ENCODE measurements at regions of chr14 and their contacts with region 1.

Region 1: GRCh38 chr14:47353186-47353585 is 322.2 kb downstream of the MDGA2 start:
- DNase-seq: no peak
- H3K4me3 ChIP-seq: no peak overlapping the region
- H3K27ac ChIP-seq: no peak overlapping the region
- H3K4me1 ChIP-seq: no peaks in the 10 kb centered on the region
- H3K27me3 ChIP-seq: no peaks in the 10 kb centered on the region
- CTCF ChIP-seq: no peak

Region 2: DNA sequence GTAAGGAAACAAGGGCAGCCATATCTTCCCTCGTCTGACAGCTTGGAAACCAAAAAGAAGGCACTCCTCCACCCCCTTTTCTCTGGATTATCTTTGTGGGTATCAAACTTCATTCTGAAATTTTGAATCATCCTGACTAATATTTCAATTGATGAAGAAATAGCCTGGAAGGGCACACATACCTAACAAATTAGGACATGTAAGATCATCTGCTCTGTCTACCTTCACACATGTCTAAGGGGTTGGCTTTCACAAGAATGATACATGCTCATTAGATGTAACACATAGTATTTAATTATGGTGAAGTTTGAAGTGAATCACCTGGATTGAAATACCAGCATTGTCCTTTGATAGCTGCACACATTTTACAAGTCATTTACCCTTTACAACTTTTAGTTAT is 353.5 kb before region 1 on chr14:
- intact Hi-C with region 1: no loop called
- DNase-seq: no peak
- H3K4me3 ChIP-seq: no peak overlapping the region
- H3K27ac ChIP-seq: no peak overlapping the region
- H3K4me1 ChIP-seq: no peaks in the 10 kb centered on the region
- H3K27me3 ChIP-seq: no peaks in the 10 kb centered on the region
- CTCF ChIP-seq: no peak

Region 3: GRCh38 chr14:47490353-47490752 is 137.2 kb after region 1 on chr14:
- intact Hi-C with region 1: loop called (anchors 5 kb)
- DNase-seq: no peak
- H3K4me3 ChIP-seq: no peak overlapping the region
- H3K27ac ChIP-seq: no peak overlapping the region
- H3K4me1 ChIP-seq: no peaks in the 10 kb centered on the region
- H3K27me3 ChIP-seq: no peaks in the 10 kb centered on the region
- CTCF ChIP-seq: no peak

Measured in kidney (tissue), 22 donors.